Panc1 (cell line): ENCODE measurements at regions of chr1 and their contacts with region 1.

Region 1: GRCh38 chr1:150561974-150562445 is 12.8 kb downstream of the ADAMTSL4 start:
- DNase-seq: no peak
- ATAC-seq: peak; percentile 75
- H3K4me3 ChIP-seq: peak overlapping the region; percentile 48 to 69
- H3K27ac ChIP-seq: peak overlapping the region; percentile 98
- H3K4me1 ChIP-seq: peaks cover 58% of the 10 kb centered on the region
- H3K27me3 ChIP-seq: no peaks in the 10 kb centered on the region
- CTCF ChIP-seq: no peak

Region 2: DNA sequence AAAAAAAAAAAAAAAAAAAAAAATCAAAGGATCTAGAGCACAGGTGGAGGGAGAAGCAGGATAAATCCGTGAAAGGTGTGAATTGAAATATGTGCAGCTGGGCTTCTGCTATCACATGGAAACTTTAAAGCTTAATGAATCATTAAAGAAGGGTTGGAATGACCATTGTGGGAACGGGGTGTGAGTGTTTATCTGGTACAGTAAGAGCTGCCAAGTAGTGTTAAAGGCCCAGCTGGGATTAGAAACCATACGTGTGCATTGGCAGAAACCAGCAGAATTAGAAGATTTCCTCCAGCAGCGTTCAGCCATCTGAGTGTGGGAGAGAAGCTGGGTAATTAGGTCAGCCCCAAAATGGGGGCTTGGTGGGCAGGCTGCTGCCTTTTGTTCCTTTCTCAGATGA is 33.0 kb before region 1 on chr1:
- CTCF ChIA-PET with region 1: interaction called, 3 read pairs
- POLR2A ChIA-PET with region 1: interaction called, 13 read pairs
- in situ Hi-C with region 1: no loop called
- intact Hi-C with region 1: no loop called
- DNase-seq: no peak
- ATAC-seq: no peak
- H3K4me3 ChIP-seq: no peak overlapping the region
- H3K27ac ChIP-seq: no peak overlapping the region
- H3K4me1 ChIP-seq: no peaks in the 10 kb centered on the region
- H3K27me3 ChIP-seq: no peaks in the 10 kb centered on the region
- CTCF ChIP-seq: no peak

Region 3: DNA sequence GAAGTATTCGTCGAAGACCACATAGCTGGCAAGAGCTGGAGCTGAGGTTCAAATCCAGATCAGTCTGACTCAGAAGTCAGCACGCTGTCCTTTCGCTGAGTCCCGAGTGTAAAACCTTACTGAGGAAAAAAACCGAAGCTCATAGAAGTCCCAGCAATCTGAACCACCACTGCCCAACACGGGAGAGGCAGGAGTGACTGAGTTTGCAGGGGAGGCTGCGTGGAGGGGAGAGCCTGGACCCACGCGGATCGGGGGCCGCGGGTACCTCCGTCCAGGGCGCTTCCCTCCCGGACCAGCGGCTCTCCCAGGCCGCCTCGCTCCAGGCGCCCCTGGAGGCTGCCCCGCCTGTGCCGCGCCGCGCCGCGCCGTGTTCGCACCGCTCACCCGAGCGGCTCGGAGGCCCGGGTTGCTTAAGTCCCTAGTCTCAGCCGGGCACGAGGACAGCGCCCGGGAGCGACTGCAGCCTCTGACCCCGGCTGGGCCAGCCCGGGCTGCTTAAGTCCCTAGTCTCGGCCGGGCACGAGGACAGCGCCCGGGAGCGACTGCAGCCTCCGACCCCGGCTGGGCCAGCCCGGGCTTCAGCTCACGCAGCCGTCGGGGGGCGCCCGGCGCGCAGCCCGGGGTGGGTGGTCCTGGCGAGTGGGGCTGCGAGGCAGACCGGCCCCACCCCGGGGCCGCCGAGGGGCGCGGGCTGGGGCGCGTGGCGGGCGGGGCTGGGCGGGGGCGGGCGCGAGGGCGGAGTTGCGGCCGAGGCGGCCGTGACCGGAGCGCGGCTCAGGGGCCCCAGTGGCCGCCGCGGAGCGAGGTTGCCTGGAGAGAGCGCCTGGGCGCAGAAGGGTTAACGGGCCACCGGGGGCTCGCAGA is 13.1 kb before region 1 on chr1 and contains the start of gene ADAMTSL4:
- CTCF ChIA-PET with region 1: interaction called, 12 read pairs
- POLR2A ChIA-PET with region 1: interaction called, 3 read pairs
- in situ Hi-C with region 1: no loop called
- intact Hi-C with region 1: no loop called
- DNase-seq: no peak
- ATAC-seq: peak; percentile 80
- H3K4me3 ChIP-seq: peak within 1 kb of the TSS; percentile 56 to 73
- H3K27ac ChIP-seq: peak within 1 kb of the TSS; percentile 80
- H3K4me1 ChIP-seq: peaks cover 27% of the 10 kb centered on the region
- H3K27me3 ChIP-seq: no peaks in the 10 kb centered on the region
- CTCF ChIP-seq: no peak
- total RNA-seq, gene ADAMTSL4: 9.5 TPM

Region 4: GRCh38 chr1:150572918-150573647 is 11.1 kb after region 1 on chr1:
- CTCF ChIA-PET with region 1: interaction called, 3 read pairs
- POLR2A ChIA-PET with region 1: interaction called, 13 read pairs
- in situ Hi-C with region 1: no loop called
- intact Hi-C with region 1: no loop called
- DNase-seq: no peak
- ATAC-seq: no peak
- H3K4me3 ChIP-seq: peak overlapping the region in 1 of 2 experiments; percentile 1; a peak in 1 of 4 replicates
- H3K27ac ChIP-seq: peak overlapping the region; percentile 51
- H3K4me1 ChIP-seq: peaks cover 58% of the 10 kb centered on the region
- H3K27me3 ChIP-seq: no peaks in the 10 kb centered on the region
- CTCF ChIP-seq: no peak

Region 5: DNA sequence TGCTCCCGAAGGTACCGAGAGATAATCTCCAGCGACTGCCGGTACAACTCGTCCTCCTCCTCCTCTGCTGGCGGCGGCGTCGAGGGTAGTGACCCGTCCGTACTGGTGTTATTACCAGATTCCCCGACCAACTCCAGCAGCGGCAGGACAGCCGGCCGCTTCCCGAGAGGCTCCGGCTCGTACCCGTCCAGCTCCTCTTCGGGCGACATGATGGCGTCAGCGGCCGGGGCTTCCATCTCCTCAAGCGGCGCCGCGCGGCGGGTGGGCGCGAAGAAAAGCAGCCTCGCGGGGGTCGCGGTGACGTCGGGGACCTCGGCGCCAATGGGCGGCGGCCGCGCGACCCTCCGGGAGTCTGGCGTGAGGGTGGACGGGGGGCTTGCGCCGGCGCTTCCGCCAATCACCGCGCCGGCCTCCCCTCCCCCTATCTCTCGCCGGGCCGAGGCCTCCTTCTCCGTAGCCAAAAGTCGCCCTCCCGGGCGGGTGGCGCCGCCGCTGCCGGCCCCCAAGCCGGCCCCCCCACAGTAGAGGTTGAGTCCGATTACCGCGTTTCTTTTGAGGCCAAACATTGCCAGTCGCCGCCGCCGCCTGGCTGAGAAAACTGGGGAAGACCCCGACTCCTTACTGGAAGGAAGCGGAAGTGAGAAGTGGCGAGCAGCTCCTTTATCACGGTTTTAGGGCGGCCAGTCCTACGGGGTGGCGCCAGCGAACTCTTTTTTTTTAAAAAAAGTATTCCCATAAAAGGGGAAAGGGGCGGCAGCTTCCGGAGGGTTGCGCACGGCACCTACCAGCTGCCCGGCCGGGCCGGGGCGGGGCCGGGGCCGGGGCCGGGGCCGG is 17.2 kb after region 1 on chr1 and contains the start of gene MCL1:
- CTCF ChIA-PET with region 1: interaction called, 10 read pairs
- POLR2A ChIA-PET with region 1: interaction called, 8 read pairs
- in situ Hi-C with region 1: no loop called
- intact Hi-C with region 1: no loop called
- DNase-seq: no peak
- ATAC-seq: peak; percentile 93
- H3K4me3 ChIP-seq: peak within 1 kb of the TSS; percentile 99 to 100
- H3K27ac ChIP-seq: peak within 1 kb of the TSS; percentile 98
- H3K4me1 ChIP-seq: peaks cover 19% of the 10 kb centered on the region
- H3K27me3 ChIP-seq: no peaks in the 10 kb centered on the region
- CTCF ChIP-seq: no peak
- total RNA-seq, gene MCL1: 126 TPM

Region 6: DNA sequence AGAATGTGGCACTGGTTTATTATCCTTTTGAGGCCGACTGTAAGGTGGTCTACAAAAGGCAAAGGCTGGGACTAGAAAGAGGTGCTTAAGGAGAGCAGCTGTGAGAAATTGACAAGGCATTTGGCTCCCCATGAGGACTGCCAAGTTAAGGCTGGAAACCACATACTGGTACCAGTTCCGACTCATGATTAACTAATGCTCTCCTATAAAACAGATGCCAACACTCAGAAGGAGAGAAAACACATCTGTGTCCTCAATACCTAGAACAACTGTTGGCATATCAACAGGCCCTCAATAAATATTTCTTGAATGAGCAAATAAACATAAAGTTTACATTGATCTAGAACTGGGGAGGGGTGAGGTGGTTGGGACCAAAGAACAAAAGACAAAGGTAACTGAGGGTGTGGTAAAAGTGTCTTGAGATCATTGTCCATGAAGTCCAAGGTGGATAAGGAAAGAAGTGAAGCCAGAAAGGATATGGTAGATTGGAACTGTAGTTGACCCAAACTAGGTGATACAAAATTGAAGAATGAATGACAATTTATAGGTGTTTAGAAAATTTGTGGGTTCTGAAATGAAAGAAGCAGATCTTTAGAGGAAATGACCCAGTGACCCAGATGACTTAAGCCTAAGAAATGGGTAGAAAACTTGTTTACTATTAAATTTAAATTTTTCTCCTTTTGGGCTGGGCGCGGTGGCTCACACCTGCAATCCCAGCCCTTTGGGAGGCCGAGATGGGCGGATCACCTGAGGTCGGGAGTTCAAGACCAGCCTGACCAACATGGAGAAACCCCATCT is 34.3 kb after region 1 on chr1:
- CTCF ChIA-PET with region 1: no interaction called
- POLR2A ChIA-PET with region 1: no interaction called
- in situ Hi-C with region 1: no loop called
- intact Hi-C with region 1: no loop called
- DNase-seq: no peak
- ATAC-seq: peak; percentile 64
- H3K4me3 ChIP-seq: no peak overlapping the region
- H3K27ac ChIP-seq: no peak overlapping the region
- H3K4me1 ChIP-seq: no peaks in the 10 kb centered on the region
- H3K27me3 ChIP-seq: no peaks in the 10 kb centered on the region
- CTCF ChIP-seq: no peak

Region 7: GRCh38 chr1:150621497-150622302 is 59.7 kb after region 1 on chr1:
- CTCF ChIA-PET with region 1: no interaction called
- POLR2A ChIA-PET with region 1: interaction called, 4 read pairs
- in situ Hi-C with region 1: no loop called
- intact Hi-C with region 1: loop called (anchors 5 kb)
- DNase-seq: no peak
- ATAC-seq: no peak
- H3K4me3 ChIP-seq: no peak overlapping the region
- H3K27ac ChIP-seq: peak overlapping the region; percentile 41; the same call in 1 of the 2 replicates
- H3K4me1 ChIP-seq: no peaks in the 10 kb centered on the region; the same call in 1 of the 2 replicates
- H3K27me3 ChIP-seq: no peaks in the 10 kb centered on the region
- CTCF ChIP-seq: peak; percentile 81

Region 8: GRCh38 chr1:150813058-150813707 is 251.2 kb after region 1 on chr1:
- CTCF ChIA-PET with region 1: interaction called, 8 read pairs
- POLR2A ChIA-PET with region 1: no interaction called
- in situ Hi-C with region 1: no loop called
- intact Hi-C with region 1: loop called (anchors 5 kb)
- DNase-seq: peak; percentile 42
- ATAC-seq: peak; percentile 97
- H3K4me3 ChIP-seq: no peak overlapping the region
- H3K27ac ChIP-seq: no peak overlapping the region
- H3K4me1 ChIP-seq: no peaks in the 10 kb centered on the region
- H3K27me3 ChIP-seq: no peaks in the 10 kb centered on the region
- CTCF ChIP-seq: peak; percentile 89

Region 9: GRCh38 chr1:151739590-151740375 is 1177.8 kb after region 1 on chr1:
- CTCF ChIA-PET with region 1: no interaction called
- POLR2A ChIA-PET with region 1: no interaction called
- in situ Hi-C with region 1: no loop called
- intact Hi-C with region 1: no loop called
- DNase-seq: no peak
- ATAC-seq: no peak
- H3K4me3 ChIP-seq: no peak overlapping the region
- H3K27ac ChIP-seq: no peak overlapping the region
- H3K4me1 ChIP-seq: no peaks in the 10 kb centered on the region
- H3K27me3 ChIP-seq: peaks cover 2% of the 10 kb centered on the region; the same call in 1 of the 2 replicates
- CTCF ChIP-seq: no peak